ENCODE measurements at regions of chr1 and their contacts with region 1.

Region 1: GRCh38 chr1:15852828-15853302 is 5.4 kb downstream of the SPEN start:
- DNase-seq: no peak
- H3K4me3 Mint-ChIP-seq: no peak overlapping the region
- H3K27ac Mint-ChIP-seq: no peak overlapping the region
- H3K4me1 Mint-ChIP-seq: peaks cover 41% of the 10 kb centered on the region
- H3K27me3 Mint-ChIP-seq: no peaks in the 10 kb centered on the region

Region 2: DNA sequence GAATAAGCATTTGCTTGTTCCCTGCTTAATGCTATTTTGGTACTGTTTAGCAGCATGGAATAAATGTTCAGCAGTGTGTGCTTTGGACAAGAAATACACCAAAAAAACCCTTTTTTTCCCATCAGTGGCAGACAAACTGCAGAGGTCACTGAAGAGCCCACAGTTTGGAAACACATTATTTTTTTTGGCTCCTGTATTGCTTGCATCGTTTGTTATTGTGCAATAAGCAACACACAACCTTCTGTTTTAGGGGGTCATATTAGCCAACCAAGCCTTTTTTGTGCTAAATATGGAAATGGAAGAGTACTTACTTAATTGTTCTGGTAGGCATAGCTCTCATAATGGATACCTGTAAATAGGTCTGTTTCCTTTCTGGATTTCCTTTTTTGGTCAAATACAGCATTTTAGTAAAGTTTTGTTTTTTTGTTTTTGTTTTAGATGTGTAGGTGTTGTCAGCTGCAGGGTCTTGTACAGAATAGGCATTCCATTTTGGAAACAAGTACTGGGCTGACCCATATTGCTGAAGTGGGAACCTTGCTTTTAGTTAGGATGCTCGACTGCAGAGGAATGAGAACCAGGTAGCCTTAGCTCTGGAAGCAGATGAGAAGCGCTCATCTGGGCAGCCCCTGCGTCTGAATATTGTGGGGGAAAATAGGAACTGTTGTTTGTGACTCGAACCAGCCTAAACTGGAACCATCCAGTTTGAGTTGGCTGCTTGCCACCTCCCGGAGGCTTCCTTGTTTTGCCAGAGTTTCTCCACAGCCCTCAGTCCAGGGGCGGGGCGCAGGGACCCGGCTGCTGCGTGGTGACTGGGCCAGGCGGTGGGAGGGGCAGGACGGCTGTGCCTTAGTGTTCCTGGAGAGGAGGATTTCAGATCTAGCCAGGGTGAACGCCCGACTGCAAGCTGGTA is 33.1 kb after region 1 on chr1:
- CTCF ChIA-PET with region 1: no interaction called
- intact Hi-C with region 1: loop called (anchors 1 kb)
- DNase-seq: peak; percentile 52
- H3K4me3 Mint-ChIP-seq: peak overlapping the region; percentile 16
- H3K27ac Mint-ChIP-seq: peak overlapping the region; percentile 20
- H3K4me1 Mint-ChIP-seq: peaks cover 52% of the 10 kb centered on the region
- H3K27me3 Mint-ChIP-seq: no peaks in the 10 kb centered on the region

Measured in activated naive CD4-positive, alpha-beta T cell treated with anti-CD3 and anti-CD28 coated beads for 36 hours (primary cell).